ENCODE measurements at regions of chr6 and their contacts with region 1.

Region 1: GRCh38 chr6:2988426-2989331 is 11.0 kb upstream of the NQO2 start:
- DNase-seq: peak; percentile 83
- ATAC-seq: peak; percentile 82
- H3K4me3 Mint-ChIP-seq: peak overlapping the region; percentile 95
- H3K27ac Mint-ChIP-seq: peak overlapping the region; percentile 100
- H3K4me1 Mint-ChIP-seq: peaks cover 19% of the 10 kb centered on the region
- H3K27me3 Mint-ChIP-seq: no peaks in the 10 kb centered on the region
- CTCF ChIP-seq: peak; percentile 71

Region 2: DNA sequence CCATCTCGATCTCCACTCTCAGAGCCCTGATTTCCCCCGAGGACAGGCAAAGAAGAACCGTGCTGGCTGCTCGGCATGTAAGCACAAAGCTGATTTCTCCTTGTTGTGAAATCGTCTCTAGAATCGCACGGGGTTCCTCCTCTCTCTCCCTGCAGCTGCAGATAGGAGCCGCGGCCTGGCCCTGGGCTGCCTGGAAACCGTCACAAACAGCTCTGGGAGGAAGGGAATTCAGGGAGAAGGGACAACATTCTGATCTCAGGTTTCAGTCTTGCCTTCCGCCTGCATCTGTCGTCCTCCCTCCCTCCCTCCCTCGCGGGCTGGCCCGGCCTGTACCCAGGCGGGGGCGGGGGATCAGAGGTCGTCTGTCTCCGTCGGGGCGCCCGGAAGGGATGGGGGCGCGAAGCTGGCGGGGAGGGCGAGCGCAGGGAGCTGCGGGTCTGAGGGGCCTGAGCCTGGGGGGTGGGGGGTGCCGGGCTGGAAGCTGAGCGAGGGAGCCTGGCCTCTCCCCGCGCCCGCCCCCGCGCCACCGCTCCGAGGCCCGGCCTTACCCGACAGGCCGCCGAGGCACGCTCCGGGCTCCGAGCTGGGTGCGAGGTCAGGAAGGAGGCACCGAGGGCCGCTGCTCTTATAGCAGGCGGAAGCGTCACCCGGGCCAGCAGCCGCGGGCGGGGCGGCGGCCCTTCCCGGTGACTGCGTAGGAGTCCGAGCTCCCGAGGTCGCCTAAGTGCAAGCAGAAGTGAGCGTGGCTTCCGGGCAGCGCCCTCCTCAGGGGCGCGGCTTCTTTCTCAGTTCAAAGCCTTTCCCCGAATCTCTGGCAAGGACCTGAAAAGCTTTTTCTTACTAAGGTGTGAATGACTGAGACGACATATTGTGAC is 147.2 kb before region 1 on chr6 and contains the start of gene SERPINB1:
- CTCF ChIA-PET with region 1: interaction called, 85 read pairs
- POLR2A ChIA-PET with region 1: interaction called, 33 read pairs
- intact Hi-C with region 1: loop called (anchors 2 kb)
- DNase-seq: peak; percentile 95
- ATAC-seq: peak; percentile 90
- H3K4me3 Mint-ChIP-seq: peak within 1 kb of the TSS; percentile 85
- H3K27ac Mint-ChIP-seq: peak within 1 kb of the TSS; percentile 92
- H3K4me1 Mint-ChIP-seq: peaks cover 65% of the 10 kb centered on the region
- H3K27me3 Mint-ChIP-seq: no peaks in the 10 kb centered on the region
- CTCF ChIP-seq: no peak
- total RNA-seq, gene SERPINB1: 55.8 to 60.0 TPM

Region 3: DNA sequence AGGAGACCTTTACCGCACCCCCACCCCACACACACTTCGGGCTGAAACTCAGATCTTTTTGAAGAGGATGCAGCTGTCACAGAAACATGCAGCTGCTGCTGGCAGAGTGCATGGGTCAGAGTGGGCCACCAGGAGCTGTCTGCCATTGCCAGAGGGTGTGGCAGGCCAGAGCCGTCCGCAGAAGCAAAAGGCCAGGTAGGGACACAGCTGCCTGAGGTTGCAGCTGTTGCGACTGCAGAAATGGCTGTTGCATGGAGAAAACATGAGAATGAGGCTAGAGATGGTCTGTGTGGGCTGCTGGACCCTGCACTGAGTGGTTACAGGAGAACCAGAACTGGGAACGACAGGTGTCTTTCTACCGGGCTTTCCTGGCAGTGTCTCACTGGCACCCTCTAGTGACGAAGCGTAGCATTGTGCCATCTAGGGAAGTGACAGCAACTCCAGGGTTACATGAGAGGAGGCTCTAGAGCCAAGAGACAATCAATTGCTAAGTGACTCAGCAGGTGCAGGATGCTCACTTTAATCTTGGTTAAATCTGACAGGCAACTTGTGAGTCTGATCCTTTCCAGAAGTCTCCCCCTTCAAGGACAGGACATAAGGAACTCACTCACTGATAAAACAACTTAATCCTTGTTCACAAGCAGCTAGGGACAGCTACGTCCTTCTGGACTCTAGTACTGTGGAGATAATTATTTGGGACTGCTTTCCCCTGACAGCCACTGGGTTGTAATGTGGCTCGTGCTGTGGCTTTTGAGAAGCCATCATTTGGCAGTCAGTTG is 56.5 kb before region 1 on chr6:
- CTCF ChIA-PET with region 1: interaction called, 35 read pairs
- POLR2A ChIA-PET with region 1: interaction called, 9 read pairs
- intact Hi-C with region 1: no loop called
- DNase-seq: peak; percentile 94
- ATAC-seq: peak; percentile 90
- H3K4me3 Mint-ChIP-seq: no peak overlapping the region
- H3K27ac Mint-ChIP-seq: peak overlapping the region; percentile 67
- H3K4me1 Mint-ChIP-seq: peaks cover 27% of the 10 kb centered on the region
- H3K27me3 Mint-ChIP-seq: no peaks in the 10 kb centered on the region
- CTCF ChIP-seq: peak; percentile 96

Region 4: GRCh38 chr6:2940010-2940850 is 48.4 kb before region 1 on chr6:
- CTCF ChIA-PET with region 1: interaction called, 14 read pairs
- POLR2A ChIA-PET with region 1: interaction called, 32 read pairs
- intact Hi-C with region 1: loop called (anchors 5 kb)
- DNase-seq: peak; percentile 94
- ATAC-seq: peak; percentile 88
- H3K4me3 Mint-ChIP-seq: peak overlapping the region; percentile 54
- H3K27ac Mint-ChIP-seq: peak overlapping the region; percentile 96
- H3K4me1 Mint-ChIP-seq: peaks cover 66% of the 10 kb centered on the region
- H3K27me3 Mint-ChIP-seq: no peaks in the 10 kb centered on the region
- CTCF ChIP-seq: no peak

Region 5: DNA sequence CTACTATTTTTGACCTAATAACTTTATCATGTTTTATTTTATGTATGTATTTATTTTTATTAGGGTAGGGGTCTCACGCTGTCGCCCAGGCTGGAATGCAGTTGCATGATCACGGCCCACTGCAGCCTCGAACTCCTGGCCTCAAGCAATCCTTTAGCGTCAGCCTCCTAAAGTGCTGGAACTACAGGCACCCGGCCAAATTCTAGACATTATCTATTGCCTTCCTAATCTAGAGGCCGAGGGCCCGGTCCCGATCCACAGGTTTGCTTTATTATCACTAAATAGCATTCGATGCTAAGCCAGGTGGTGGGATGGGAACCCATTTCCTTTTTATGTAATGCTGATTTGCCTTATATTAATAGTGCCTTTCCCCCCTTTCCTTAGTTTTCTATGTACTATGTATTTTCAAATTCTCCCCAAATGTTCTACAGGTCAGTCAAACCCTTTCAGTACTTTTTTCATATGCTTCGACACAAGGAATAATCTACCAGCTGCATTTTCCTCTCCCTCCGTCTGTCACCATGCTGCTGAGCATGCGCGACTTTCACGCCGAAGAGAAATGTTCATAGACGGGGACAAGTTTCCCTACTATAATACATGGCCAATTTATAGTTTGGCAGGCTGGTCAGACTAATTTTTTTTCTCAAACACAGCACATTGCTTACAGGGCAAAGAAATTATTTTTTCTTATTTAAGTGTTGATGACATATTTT is 23.7 kb before region 1 on chr6:
- CTCF ChIA-PET with region 1: no interaction called
- POLR2A ChIA-PET with region 1: no interaction called
- intact Hi-C with region 1: no loop called
- DNase-seq: no peak
- ATAC-seq: no peak
- H3K4me3 Mint-ChIP-seq: no peak overlapping the region
- H3K27ac Mint-ChIP-seq: no peak overlapping the region
- H3K4me1 Mint-ChIP-seq: peaks cover 42% of the 10 kb centered on the region
- H3K27me3 Mint-ChIP-seq: no peaks in the 10 kb centered on the region
- CTCF ChIP-seq: no peak

Region 6: GRCh38 chr6:2976571-2977085 is 12.1 kb before region 1 on chr6:
- CTCF ChIA-PET with region 1: interaction called, 18 read pairs
- POLR2A ChIA-PET with region 1: interaction called, 11 read pairs
- intact Hi-C with region 1: no loop called
- DNase-seq: no peak
- ATAC-seq: no peak
- H3K4me3 Mint-ChIP-seq: no peak overlapping the region
- H3K27ac Mint-ChIP-seq: peak overlapping the region; percentile 66
- H3K4me1 Mint-ChIP-seq: peaks cover 40% of the 10 kb centered on the region
- H3K27me3 Mint-ChIP-seq: peaks cover 2% of the 10 kb centered on the region
- CTCF ChIP-seq: no peak

Region 7: DNA sequence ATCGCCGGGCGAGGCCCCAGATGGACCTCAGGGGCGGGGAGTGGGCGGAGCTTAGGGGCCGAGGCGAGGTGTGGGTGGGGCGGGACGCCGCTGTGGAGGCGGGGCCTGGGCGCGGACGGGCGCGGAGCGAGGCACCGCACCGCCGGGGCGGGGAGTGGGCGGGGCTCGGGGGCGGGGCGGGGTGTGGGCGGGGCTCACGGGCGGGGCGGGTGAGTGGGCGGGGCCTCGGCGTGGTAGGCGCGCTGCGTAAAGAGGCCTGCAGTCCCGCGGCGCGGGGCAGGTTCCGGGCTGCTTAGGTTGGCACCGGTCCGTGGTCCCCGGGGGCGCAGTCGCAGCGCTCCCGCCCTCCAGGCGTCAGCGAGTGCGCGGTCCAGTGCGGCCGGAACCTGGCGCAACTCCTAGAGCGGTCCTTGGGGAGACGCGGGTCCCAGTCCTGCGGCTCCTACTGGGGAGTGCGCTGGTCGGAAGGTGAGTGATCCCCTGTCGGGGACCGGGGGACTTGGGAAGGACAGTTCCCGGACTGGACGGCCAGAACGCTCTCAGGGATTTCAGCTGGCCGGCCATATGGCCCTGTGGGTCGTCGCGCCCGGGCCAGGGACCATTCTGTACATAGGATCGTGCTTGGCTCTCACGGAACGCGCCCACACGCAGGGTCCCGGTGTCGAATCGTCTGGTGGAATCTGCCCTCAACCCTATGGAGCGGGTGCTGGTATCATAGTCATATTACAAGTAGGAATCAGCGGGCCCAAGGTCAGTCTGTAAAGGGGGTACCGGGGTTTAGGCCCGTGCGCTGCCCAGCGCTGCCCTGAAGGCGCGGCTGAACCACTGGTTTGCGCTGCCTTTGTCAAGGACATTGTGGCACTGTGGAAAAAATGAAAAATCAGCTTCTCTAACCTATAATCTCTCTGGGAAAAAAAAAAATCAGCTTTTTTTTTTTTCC is 11.2 kb after region 1 on chr6 and contains the start of gene NQO2:
- CTCF ChIA-PET with region 1: interaction called, 36 read pairs
- POLR2A ChIA-PET with region 1: interaction called, 12 read pairs
- intact Hi-C with region 1: no loop called
- DNase-seq: peak; percentile 92
- ATAC-seq: peak; percentile 83
- H3K4me3 Mint-ChIP-seq: peak within 1 kb of the TSS; percentile 83
- H3K27ac Mint-ChIP-seq: peak within 1 kb of the TSS; percentile 94
- H3K4me1 Mint-ChIP-seq: peaks cover 20% of the 10 kb centered on the region
- H3K27me3 Mint-ChIP-seq: no peaks in the 10 kb centered on the region
- CTCF ChIP-seq: no peak
- total RNA-seq, gene NQO2: 23.8 to 24.7 TPM

Region 8: GRCh38 chr6:3068329-3069214 is 79.9 kb after region 1 on chr6 and contains the start of gene RIPK1:
- CTCF ChIA-PET with region 1: interaction called, 11 read pairs
- POLR2A ChIA-PET with region 1: interaction called, 9 read pairs
- intact Hi-C with region 1: no loop called
- DNase-seq: peak; percentile 95
- ATAC-seq: peak; percentile 84
- H3K4me3 Mint-ChIP-seq: peak within 1 kb of the TSS; percentile 96
- H3K27ac Mint-ChIP-seq: peak within 1 kb of the TSS; percentile 98
- H3K4me1 Mint-ChIP-seq: peaks cover 39% of the 10 kb centered on the region
- H3K27me3 Mint-ChIP-seq: no peaks in the 10 kb centered on the region
- CTCF ChIP-seq: no peak
- total RNA-seq, gene RIPK1: 8.8 to 9.0 TPM

Region 9: DNA sequence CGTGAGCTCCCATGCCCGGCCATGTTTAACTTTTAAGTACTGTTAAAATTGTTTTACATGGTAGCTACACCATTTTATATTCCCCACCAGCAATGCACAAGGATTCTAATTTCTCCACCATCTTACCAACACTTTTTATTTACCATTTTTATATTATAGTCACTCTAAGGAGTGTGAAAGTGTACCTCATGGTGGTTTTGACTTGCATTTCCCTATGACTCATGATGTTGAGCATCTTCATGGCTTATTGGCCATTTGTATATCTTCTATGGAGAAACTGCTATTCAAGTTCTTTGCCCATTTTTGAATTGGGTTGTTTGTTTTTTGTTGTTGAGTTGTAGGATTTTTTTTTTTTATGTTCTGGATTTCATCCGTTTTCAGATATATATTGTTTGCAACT is 114.2 kb after region 1 on chr6:
- CTCF ChIA-PET with region 1: no interaction called
- POLR2A ChIA-PET with region 1: no interaction called
- intact Hi-C with region 1: no loop called
- DNase-seq: no peak
- ATAC-seq: peak; percentile 69
- H3K4me3 Mint-ChIP-seq: no peak overlapping the region
- H3K27ac Mint-ChIP-seq: no peak overlapping the region
- H3K4me1 Mint-ChIP-seq: peaks cover 14% of the 10 kb centered on the region
- H3K27me3 Mint-ChIP-seq: no peaks in the 10 kb centered on the region
- CTCF ChIP-seq: no peak

Measured in activated CD8-positive, alpha-beta T cell treated with anti-CD3 and anti-CD28 coated beads for 36 hours (primary cell).